Sigmoid colon (tissue), 7 donors: ENCODE measurements at regions of chr22 and their contacts with region 1.

Region 1: GRCh38 chr22:40276996-40277823 is 69.1 kb upstream of the ADSL start:
- DNase-seq: no peak
- H3K4me3 ChIP-seq: peak overlapping the region; percentile 16 to 47 (median 38)
- H3K27ac ChIP-seq: peak overlapping the region; percentile 79 to 87 (median 84)
- H3K4me1 ChIP-seq: peaks cover 0 to 21% (median 18%) of the 10 kb centered on the region in 4 donors
- H3K27me3 ChIP-seq: no peaks in the 10 kb centered on the region
- CTCF ChIP-seq: no peak
- EP300 ChIP-seq: no peak
- POLR2A ChIP-seq: no peak

Region 2: DNA sequence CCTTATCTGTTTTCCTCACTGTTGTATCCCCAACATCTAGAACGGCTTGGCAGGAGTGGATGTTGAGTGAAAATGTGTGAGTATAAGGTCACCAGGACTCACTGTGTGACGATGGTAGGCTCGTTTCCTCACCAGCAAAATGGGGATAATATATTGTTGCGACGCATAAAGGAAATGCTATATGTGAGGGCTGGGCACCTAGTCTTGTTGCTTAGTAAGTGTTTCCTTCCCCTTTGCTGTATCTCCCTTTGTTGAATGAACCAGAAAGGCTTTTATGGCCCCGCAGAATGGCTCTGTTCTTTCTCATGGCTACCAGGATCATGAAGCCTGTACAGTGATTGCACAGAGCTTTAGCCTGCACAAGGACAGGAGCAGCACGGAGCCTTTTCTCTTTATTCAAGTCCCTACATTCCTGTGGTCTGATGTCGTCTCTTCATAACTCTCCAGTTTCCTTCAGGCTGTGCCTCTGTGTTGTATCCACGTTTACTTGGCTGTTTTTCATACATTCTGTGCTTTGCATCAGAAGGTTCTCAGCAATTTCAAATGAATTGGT is 94.1 kb before region 1 on chr22:
- intact Hi-C with region 1: loop called (anchors 2 kb)
- DNase-seq: peak; percentile 78
- H3K4me3 ChIP-seq: peak overlapping the region in 1 of 4 donors; percentile 1
- H3K27ac ChIP-seq: peak overlapping the region; percentile 54 to 90 (median 77)
- H3K4me1 ChIP-seq: peaks cover 0 to 78% (median 68%) of the 10 kb centered on the region in 4 donors
- H3K27me3 ChIP-seq: no peaks in the 10 kb centered on the region
- CTCF ChIP-seq: no peak
- EP300 ChIP-seq: no peak
- POLR2A ChIP-seq: no peak

Region 3: GRCh38 chr22:40651563-40652501 is 374.6 kb after region 1 on chr22:
- intact Hi-C with region 1: loop called (anchors 2 kb)
- DNase-seq: peak; percentile 99
- H3K4me3 ChIP-seq: peak overlapping the region; percentile 37 to 67 (median 60)
- H3K27ac ChIP-seq: peak overlapping the region; percentile 89 to 97 (median 96)
- H3K4me1 ChIP-seq: peaks cover 0 to 38% (median 33%) of the 10 kb centered on the region in 4 donors
- H3K27me3 ChIP-seq: no peaks in the 10 kb centered on the region
- CTCF ChIP-seq: no peak
- EP300 ChIP-seq: peak in 1 of 4 donors; percentile 42
- POLR2A ChIP-seq: peak; percentile 58 to 82

Region 4: GRCh38 chr22:40826984-40827741 is 550.0 kb after region 1 on chr22:
- intact Hi-C with region 1: no loop called
- DNase-seq: no peak
- H3K4me3 ChIP-seq: no peak overlapping the region
- H3K27ac ChIP-seq: no peak overlapping the region
- H3K4me1 ChIP-seq: no peaks in the 10 kb centered on the region
- H3K27me3 ChIP-seq: no peaks in the 10 kb centered on the region
- CTCF ChIP-seq: no peak
- EP300 ChIP-seq: no peak
- POLR2A ChIP-seq: no peak